A673 (cell line): ENCODE measurements at regions of chr5 and their contacts with region 1.

Region 1: GRCh38 chr5:126777974-126778674 is 1.2 kb downstream of the LMNB1 start:
- DNase-seq: peak; percentile 99
- H3K4me3 ChIP-seq: peak overlapping the region; percentile 99
- H3K27ac ChIP-seq: peak overlapping the region; percentile 100
- H3K4me1 ChIP-seq: peaks cover 8% of the 10 kb centered on the region
- H3K27me3 ChIP-seq: no peaks in the 10 kb centered on the region
- CTCF ChIP-seq: no peak

Region 2: GRCh38 chr5:126676195-126676624 is 101.9 kb before region 1 on chr5:
- CTCF ChIA-PET with region 1: interaction called, 5 read pairs
- POLR2A ChIA-PET with region 1: no interaction called
- intact Hi-C with region 1: loop called (anchors 1 kb)
- DNase-seq: peak; percentile 72
- H3K4me3 ChIP-seq: no peak overlapping the region
- H3K27ac ChIP-seq: no peak overlapping the region
- H3K4me1 ChIP-seq: peaks cover 14% of the 10 kb centered on the region
- H3K27me3 ChIP-seq: no peaks in the 10 kb centered on the region
- CTCF ChIP-seq: peak; percentile 87

Region 3: GRCh38 chr5:126794157-126794828 is 16.2 kb after region 1 on chr5:
- CTCF ChIA-PET with region 1: interaction called, 4 read pairs
- POLR2A ChIA-PET with region 1: interaction called, 12 read pairs
- intact Hi-C with region 1: no loop called
- DNase-seq: no peak
- H3K4me3 ChIP-seq: no peak overlapping the region
- H3K27ac ChIP-seq: peak overlapping the region; percentile 12
- H3K4me1 ChIP-seq: peaks cover 19% of the 10 kb centered on the region
- H3K27me3 ChIP-seq: no peaks in the 10 kb centered on the region
- CTCF ChIP-seq: no peak

Region 4: GRCh38 chr5:126801992-126802294 is 23.8 kb after region 1 on chr5:
- CTCF ChIA-PET with region 1: interaction called, 6 read pairs
- POLR2A ChIA-PET with region 1: interaction called, 11 read pairs
- intact Hi-C with region 1: no loop called
- DNase-seq: peak; percentile 59
- H3K4me3 ChIP-seq: no peak overlapping the region
- H3K27ac ChIP-seq: no peak overlapping the region
- H3K4me1 ChIP-seq: peaks cover 25% of the 10 kb centered on the region
- H3K27me3 ChIP-seq: no peaks in the 10 kb centered on the region
- CTCF ChIP-seq: peak; percentile 54